Kidney (tissue), 22 donors: ENCODE measurements at regions of chr7 and their contacts with region 1.

Region 1: DNA sequence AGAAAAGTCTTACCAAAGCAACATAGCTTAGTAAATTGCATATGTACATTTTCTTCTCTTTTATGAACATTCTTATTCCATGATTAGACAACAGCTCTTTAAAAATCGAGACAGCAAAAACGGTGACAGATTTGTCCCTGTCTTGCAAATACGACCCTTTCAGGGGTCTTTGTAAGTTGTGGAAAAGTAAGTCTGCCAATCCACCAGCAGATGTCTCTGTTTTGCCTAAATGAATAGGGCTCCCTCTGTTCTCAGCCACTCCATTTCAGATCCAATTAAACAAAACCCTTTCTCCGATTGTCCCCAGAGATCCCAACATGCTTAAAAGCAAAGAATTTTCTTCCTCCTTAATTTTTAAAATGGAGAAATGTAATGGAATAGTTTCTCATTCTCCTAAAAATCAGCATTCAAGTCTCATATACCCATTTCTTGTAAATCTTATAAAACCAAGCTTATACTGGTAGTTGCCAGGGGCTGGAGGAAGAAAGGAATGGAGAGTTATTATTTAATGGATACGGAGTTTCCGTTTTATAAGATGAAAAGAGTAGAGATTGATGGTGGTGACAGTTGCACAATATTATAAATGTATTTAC is 61.0 kb upstream of the NFE2L3 start:
- DNase-seq: peak in 3 of 5 donors; percentile 32 to 87 (median 85)
- H3K4me3 ChIP-seq: peak overlapping the region in 1 of 3 donors; percentile 3
- H3K27ac ChIP-seq: no peak overlapping the region
- H3K4me1 ChIP-seq: no peaks in the 10 kb centered on the region
- H3K27me3 ChIP-seq: no peaks in the 10 kb centered on the region
- CTCF ChIP-seq: peak; percentile 64

Region 2: GRCh38 chr7:26022982-26023381 is 68.0 kb before region 1 on chr7:
- intact Hi-C with region 1: no loop called
- DNase-seq: no peak
- H3K4me3 ChIP-seq: no peak overlapping the region
- H3K27ac ChIP-seq: no peak overlapping the region
- H3K4me1 ChIP-seq: no peaks in the 10 kb centered on the region
- H3K27me3 ChIP-seq: no peaks in the 10 kb centered on the region
- CTCF ChIP-seq: no peak

Region 3: GRCh38 chr7:26365077-26365900 is 274.3 kb after region 1 on chr7:
- intact Hi-C with region 1: loop called (anchors 10 kb)
- DNase-seq: peak in 4 of 5 donors; percentile 79 to 94 (median 88)
- H3K4me3 ChIP-seq: peak overlapping the region in 1 of 3 donors; percentile 13
- H3K27ac ChIP-seq: peak overlapping the region; percentile 43 to 86
- H3K4me1 ChIP-seq: peaks cover 6 to 19% (median 16%) of the 10 kb centered on the region in 3 donors
- H3K27me3 ChIP-seq: no peaks in the 10 kb centered on the region
- CTCF ChIP-seq: peak; percentile 84